IMR-90 (cell line): ENCODE measurements at regions of chr19 and their contacts with region 1.

Region 1: DNA sequence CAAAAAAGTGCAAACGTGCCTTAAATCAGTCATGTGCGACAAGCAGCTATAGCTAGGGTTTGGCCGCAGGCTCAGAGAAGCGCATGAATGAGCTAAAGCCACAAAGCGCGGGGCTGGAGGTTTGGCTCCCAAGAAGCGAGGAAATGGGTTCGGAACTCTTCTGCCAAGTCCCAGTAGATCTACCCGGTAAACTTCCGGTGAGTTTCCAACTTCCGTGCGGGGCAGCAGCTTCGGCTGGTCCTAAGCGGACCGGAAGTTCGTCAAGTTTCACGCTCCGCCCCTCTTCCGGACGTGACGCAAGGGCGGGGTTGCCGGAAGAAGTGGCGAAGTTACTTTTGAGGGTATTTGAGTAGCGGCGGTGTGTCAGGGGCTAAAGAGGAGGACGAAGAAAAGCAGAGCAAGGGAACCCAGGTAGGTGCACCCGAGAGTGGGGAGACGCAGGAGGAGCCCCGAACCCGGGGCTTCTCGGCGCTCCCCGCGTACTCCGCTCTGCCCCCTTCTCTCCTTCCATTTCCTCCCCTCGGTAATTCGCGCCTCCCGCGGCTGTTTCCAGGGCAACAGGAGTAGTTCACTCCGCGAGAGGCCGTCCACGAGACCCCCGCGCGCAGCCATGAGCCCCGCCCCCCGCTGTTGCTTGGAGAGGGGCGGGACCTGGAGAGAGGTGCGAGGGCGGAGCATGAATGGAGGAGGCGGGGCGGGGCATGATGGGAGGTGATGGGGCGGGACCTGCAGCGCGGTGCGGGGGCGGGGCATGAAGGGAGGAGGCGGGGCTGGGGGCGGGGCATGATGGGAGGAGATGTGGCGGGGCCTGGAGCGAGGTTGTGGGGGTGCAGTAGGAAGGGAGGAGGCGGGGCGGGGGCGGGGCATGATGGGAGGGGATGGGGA is at the start of gene NR1H2:
- DNase-seq: peak; percentile 98
- ATAC-seq: peak; percentile 97
- H3K4me3 ChIP-seq: peak within 1 kb of the TSS; percentile 52
- H3K27ac ChIP-seq: peak within 1 kb of the TSS; percentile 64
- H3K4me1 ChIP-seq: no peaks in the 10 kb centered on the region
- H3K27me3 ChIP-seq: no peaks in the 10 kb centered on the region
- CTCF ChIP-seq: no peak
- POLR2A ChIP-seq: peak; percentile 93
- RAD21 ChIP-seq: no peak
- total RNA-seq, gene NR1H2: 34.7 and 37.8 TPM in 2 replicates

Region 2: GRCh38 chr19:50679177-50680125 is 303.0 kb after region 1 on chr19:
- CTCF ChIA-PET with region 1: no interaction called
- POLR2A ChIA-PET with region 1: no interaction called
- dilution Hi-C with region 1: no loop called
- in situ Hi-C with region 1: no loop called
- intact Hi-C with region 1: no loop called
- DNase-seq: peak; percentile 66
- ATAC-seq: peak; percentile 99
- H3K4me3 ChIP-seq: no peak overlapping the region
- H3K27ac ChIP-seq: no peak overlapping the region
- H3K4me1 ChIP-seq: no peaks in the 10 kb centered on the region
- H3K27me3 ChIP-seq: no peaks in the 10 kb centered on the region
- CTCF ChIP-seq: no peak
- POLR2A ChIP-seq: no peak
- RAD21 ChIP-seq: no peak

Region 3: DNA sequence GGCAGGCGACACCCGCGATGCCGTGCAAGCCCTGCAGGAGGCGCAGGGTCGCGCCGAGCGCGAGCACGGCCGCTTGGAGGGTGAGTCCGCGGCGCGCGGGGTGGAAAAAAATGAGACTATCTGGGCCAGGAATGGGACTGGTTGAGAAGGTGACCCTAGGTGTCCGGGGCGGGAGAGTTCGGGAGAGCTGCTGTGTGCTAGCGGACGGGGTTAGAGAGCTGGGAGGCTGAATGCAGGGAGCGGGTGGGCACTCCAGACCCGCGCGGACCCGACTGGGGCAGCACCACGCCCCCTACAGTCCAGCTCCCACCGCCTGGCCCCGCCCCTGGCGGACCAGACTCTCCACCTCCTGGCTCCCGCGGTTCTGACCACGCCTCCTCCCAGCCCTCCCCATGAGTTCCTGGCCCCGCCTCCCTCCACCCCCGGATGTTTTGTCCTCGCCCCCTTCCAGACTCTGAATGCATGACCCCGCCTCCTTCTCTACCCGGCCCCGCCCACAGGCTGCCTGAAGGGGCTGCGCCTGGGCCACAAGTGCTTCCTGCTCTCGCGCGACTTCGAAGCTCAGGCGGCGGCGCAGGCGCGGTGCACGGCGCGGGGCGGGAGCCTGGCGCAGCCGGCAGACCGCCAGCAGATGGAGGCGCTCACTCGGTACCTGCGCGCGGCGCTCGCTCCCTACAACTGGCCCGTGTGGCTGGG is 348.3 kb after region 1 on chr19:
- CTCF ChIA-PET with region 1: no interaction called
- POLR2A ChIA-PET with region 1: no interaction called
- dilution Hi-C with region 1: no loop called
- in situ Hi-C with region 1: loop called (anchors 5 kb)
- intact Hi-C with region 1: no loop called
- DNase-seq: peak; percentile 99
- ATAC-seq: peak; percentile 86
- H3K4me3 ChIP-seq: peak overlapping the region; percentile 70
- H3K27ac ChIP-seq: peak overlapping the region; percentile 87
- H3K4me1 ChIP-seq: peaks cover 19% of the 10 kb centered on the region
- H3K27me3 ChIP-seq: no peaks in the 10 kb centered on the region
- CTCF ChIP-seq: peak; percentile 77
- POLR2A ChIP-seq: 0 out of 2 replicates have a peak, but pooled peaks have one; percentile 29
- RAD21 ChIP-seq: peak; percentile 38; the same call in 1 of the 2 replicates

Region 4: DNA sequence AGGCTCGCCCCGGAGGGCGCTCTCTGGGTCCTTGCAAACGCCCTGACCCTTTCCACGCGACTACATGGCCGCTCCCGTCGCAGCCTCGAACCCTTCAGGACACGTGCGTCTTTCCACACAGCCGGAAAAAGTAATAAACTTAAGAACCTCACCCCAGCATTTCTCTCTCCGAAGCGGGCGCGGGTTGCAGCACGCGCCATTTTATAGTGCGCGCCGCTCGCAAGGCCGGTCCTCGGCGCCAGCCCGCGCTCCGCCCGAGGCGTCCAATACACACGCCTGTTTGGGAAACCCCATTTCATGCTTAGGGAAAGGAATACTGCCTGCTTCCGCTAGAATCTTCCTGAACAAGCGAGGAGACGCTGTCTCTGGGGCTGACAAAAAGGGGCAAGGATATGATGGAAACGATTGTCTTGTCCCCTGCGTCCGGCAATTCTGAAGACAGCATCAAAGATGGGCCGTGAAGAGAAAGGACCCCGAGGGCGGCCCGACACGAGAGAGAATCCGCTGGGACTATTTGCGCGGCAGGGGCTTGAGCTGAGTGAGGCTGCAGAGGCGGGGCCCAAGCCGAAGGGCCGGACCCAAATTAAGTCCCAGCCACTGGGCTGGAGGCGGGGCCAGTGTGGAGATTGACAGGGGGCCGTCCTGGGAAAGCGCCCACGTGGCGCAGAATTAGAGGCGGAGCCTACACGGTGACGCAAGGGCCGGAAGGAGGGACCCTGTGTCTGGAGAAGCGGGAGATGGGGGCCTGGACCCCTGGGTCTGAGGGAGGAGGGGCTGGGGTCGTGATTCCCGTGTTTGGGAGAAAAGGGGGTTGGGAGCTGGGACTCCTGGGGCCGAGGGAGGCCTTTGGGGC is 428.2 kb after region 1 on chr19:
- CTCF ChIA-PET with region 1: no interaction called
- POLR2A ChIA-PET with region 1: interaction called, 3 read pairs
- dilution Hi-C with region 1: no loop called
- in situ Hi-C with region 1: no loop called
- intact Hi-C with region 1: loop called (anchors 5 kb)
- DNase-seq: peak; percentile 99
- ATAC-seq: peak; percentile 97
- H3K4me3 ChIP-seq: peak overlapping the region; percentile 61
- H3K27ac ChIP-seq: peak overlapping the region; percentile 98
- H3K4me1 ChIP-seq: peaks cover 3% of the 10 kb centered on the region; the same call in 1 of the 2 replicates
- H3K27me3 ChIP-seq: no peaks in the 10 kb centered on the region
- CTCF ChIP-seq: no peak
- POLR2A ChIP-seq: peak; percentile 99
- RAD21 ChIP-seq: no peak